Gastrocnemius medialis (tissue), 4 donors: ENCODE measurements at regions of chr6 and their contacts with region 1.

Region 1: DNA sequence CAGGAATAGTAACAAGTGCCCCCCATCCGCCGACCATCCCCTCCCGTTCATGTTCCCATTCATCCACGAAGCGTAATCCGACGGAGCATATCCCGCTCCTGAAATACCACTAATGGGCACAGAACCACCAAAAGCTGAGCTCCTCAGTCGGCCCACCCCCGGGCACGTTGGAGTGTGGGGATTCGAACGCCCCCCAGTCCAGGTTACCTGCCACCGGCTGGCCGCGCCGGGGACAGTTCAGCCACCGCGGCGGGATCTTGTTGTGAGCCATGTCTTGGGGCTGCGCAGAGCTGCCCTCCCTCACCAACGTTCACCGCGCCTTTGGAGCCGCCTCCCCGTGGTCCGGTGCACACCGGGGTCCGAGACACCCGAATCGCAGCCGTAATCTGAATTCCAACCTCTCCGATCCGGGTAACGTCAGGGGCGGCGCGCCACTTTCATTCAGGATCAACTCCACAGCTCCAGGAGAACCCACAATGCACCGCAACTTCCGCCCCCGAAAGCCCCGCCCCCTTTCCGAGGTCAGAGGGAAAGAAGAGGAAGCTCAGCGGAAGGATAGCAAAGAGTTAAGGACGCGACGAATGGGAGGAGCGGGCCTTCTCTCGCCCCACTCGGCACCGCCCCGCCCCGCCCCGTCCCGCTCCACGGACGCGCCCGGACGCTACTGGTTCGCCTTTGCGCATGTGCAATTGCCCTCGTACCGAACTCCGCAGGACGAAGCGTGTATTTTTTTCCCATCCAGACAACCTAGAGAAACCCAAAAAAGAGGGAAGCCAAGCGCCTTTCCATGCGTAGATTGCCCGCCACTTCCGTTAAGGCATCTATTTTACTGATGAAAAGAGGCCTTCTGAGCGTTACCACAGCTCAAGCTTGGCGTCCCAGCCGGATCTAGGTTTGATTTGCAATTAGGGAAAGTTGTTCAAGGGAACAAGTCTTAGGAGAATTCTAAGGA is at the start of gene RNGTT:
- DNase-seq: peak; percentile 97 to 98
- ATAC-seq: peak; percentile 99 to 100
- H3K4me3 ChIP-seq: peak within 1 kb of the TSS; percentile 86 to 97 (median 92)
- H3K27ac ChIP-seq: peak within 1 kb of the TSS; percentile 86 to 90 (median 90)
- H3K4me1 ChIP-seq: peaks cover 15 to 17% of the 10 kb centered on the region in 2 donors
- H3K27me3 ChIP-seq: no peaks in the 10 kb centered on the region
- CTCF ChIP-seq: no peak
- POLR2A ChIP-seq: peak; percentile 23 to 46
- total RNA-seq, gene RNGTT: 4.9 to 11.3 (median 8.2) TPM

Region 2: GRCh38 chr6:89638320-89639195 is 675.1 kb after region 1 on chr6 and contains the start of gene LYRM2:
- in situ Hi-C with region 1: loop called in 2 of 4 experiments (anchors 25 kb)
- intact Hi-C with region 1: no loop called
- DNase-seq: peak; percentile 93 to 94
- ATAC-seq: peak; percentile 97 to 98
- H3K4me3 ChIP-seq: peak within 1 kb of the TSS; percentile 76 to 88 (median 85)
- H3K27ac ChIP-seq: peak within 1 kb of the TSS; percentile 90 to 98 (median 95)
- H3K4me1 ChIP-seq: peaks cover 14% of the 10 kb centered on the region in 2 donors
- H3K27me3 ChIP-seq: no peaks in the 10 kb centered on the region
- CTCF ChIP-seq: peak in 4 of 5 experiments; percentile 5 to 27 (median 19)
- POLR2A ChIP-seq: peak; percentile 90 to 91
- total RNA-seq, gene LYRM2: 15.8 to 40.2 (median 23.3) TPM

Region 3: GRCh38 chr6:89829591-89830385 is 866.4 kb after region 1 on chr6 and contains the start of gene CASP8AP2:
- in situ Hi-C with region 1: no loop called
- intact Hi-C with region 1: loop called (anchors 10 kb)
- DNase-seq: peak; percentile 93 to 96
- ATAC-seq: peak; percentile 99 to 100
- H3K4me3 ChIP-seq: peak within 1 kb of the TSS; percentile 64 to 98 (median 88)
- H3K27ac ChIP-seq: peak within 1 kb of the TSS; percentile 81 to 89 (median 84)
- H3K4me1 ChIP-seq: peaks cover 11 to 18% of the 10 kb centered on the region in 2 donors
- H3K27me3 ChIP-seq: no peaks in the 10 kb centered on the region
- CTCF ChIP-seq: no peak
- POLR2A ChIP-seq: peak; percentile 73 to 91
- total RNA-seq, gene CASP8AP2: 7.8 to 14.2 (median 11.6) TPM

Region 4: DNA sequence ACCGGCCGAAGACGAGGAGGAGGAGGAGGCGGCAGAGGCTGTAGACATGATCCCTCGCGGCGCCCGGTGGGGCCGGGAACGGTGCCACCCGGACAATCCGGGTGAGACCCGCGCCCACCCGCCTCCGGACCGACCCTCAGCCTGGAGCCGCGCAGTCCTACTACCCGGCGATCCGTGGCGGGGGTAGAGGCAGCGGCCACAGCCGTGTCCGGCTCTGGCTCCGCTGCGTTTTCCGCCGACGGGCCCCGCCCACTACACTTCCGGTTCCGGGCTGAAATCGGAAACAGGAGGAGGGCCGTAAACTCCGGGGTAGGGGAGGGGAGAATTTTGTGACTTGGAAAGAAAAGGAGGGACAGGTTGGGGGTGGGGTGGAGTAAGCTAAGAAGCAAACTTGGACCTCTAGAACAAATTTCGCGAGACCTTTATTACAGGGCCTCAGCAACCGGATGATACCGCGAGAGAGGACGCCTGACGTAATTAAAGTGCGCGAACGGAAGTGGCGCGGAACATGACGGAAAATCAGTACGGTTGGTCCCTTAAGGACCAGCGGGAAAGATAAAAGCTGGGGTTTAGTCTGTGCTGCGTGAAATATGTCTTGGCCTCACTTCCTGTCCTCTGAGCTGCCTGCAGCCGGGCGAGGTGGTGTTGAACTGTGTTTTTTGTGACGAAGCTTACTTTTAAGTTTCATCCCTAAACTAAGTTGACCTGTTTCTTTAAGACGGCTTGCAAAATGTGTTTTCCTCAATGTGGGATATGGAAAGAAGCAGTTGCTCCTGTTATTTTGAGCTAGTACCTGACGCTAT is 1623.6 kb after region 1 on chr6 and contains the start of gene MAP3K7:
- in situ Hi-C with region 1: loop called in 1 of 4 experiments (anchors 25 kb)
- intact Hi-C with region 1: no loop called
- DNase-seq: peak; percentile 80 to 90
- ATAC-seq: peak; percentile 97 to 98
- H3K4me3 ChIP-seq: peak within 1 kb of the TSS; percentile 94 to 100 (median 99)
- H3K27ac ChIP-seq: peak within 1 kb of the TSS; percentile 87 to 96 (median 92)
- H3K4me1 ChIP-seq: peaks cover 27 to 42% of the 10 kb centered on the region in 2 donors
- H3K27me3 ChIP-seq: no peaks in the 10 kb centered on the region
- CTCF ChIP-seq: no peak
- POLR2A ChIP-seq: peak; percentile 71 to 81
- total RNA-seq, gene MAP3K7: 16.6 to 27.2 (median 18.9) TPM